T-cell (primary cell): ENCODE measurements at regions of chr20 and their contacts with region 1.

Region 1: DNA sequence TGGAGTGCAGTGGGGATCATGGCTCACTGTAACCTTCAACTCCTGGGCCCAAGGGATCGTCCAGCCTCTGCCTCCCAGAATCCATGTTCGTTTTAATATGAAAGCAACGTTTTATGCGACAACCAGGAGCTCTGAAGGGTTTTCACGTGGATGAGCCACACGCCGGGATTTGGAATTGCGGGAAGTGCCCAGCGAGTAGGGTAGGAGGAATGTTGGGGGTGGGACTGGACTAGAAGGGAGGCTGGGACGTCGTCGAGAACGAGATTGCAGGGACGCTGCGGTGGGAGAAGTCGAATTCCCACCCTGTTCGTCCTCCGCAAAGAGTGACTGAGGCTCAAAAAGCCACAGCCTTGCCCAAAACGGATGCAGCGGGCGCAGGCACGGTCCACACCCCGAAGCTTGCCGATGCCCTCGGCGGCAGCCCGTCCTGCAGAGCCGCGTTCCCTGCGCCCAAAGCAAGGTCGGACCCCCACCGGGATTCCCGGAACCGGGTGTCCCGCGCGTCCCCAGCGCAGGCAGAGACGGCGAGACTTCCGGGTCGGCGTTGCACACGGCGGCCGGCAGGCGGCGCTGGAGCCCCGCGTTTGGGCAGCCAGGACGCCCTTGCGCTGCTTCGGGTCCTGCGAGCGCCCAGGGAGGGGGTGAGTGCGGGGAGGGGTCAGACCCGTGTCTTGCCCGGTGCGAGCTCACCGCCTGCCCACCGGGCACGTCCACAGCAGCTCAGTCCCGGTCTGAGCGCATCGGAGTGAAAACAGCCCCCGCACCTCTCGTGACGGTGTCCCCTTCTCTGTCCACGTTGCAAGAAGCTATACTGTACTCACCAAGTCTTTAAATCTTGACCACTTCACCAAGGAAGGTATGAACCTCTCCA is 87.8 kb downstream of the DHX35 start:
- DNase-seq: peak; percentile 42 to 90 (median 66)
- ATAC-seq: peak; percentile 86 to 93 (median 91)
- H3K4me3 ChIP-seq: peak overlapping the region; percentile 48 to 74
- H3K4me3 Mint-ChIP-seq: peak overlapping the region; percentile 80 to 87 (median 82)
- H3K27ac ChIP-seq: peak overlapping the region; percentile 52
- H3K27ac Mint-ChIP-seq: peak overlapping the region; percentile 24 to 79
- H3K4me1 ChIP-seq: peaks cover 3 to 14% of the 10 kb centered on the region in 2 experiments
- H3K4me1 Mint-ChIP-seq: peaks cover 0 to 14% (median 7%) of the 10 kb centered on the region in 3 donors
- H3K27me3 ChIP-seq: peaks cover 0 to 4% of the 10 kb centered on the region in 2 experiments
- H3K27me3 Mint-ChIP-seq: peaks cover 0 to 6% of the 10 kb centered on the region in 2 donors

Region 2: DNA sequence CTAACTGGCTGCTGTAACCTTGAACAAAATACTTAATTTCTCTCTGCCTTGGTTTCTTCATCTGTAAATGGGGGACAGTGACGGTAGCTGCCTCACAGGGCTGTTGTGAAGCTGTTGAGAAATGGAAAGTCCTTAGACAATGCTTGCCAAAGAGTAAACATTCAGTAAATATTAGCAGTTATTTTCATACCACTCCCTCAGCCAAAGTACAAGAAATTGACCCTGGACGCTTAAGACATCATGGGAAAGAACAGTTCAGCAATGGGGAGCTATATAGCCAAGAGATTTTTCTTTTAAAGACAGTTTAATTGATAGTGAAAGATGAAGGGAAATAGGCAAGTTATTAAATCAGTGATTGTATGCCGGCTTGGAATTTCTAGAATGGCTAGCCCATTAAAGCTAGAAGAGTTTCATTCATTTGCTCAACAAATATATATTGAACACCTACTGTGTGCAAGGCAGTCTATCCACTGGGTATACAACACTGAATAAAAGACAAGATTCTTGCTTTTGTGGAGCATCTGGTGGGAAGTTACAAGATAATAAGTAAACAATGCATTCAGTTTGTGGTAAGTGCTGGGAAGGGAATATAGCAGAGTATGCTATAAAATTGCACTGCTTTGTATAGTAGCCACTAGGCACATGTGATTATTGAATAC is 1354.1 kb before region 1 on chr20:
- CTCF ChIA-PET with region 1: interaction called in 1 of 2 experiments, 10 read pairs
- POLR2A ChIA-PET with region 1: no interaction called
- DNase-seq: no peak
- ATAC-seq: no peak
- H3K4me3 ChIP-seq: no peak overlapping the region
- H3K4me3 Mint-ChIP-seq: peak overlapping the region; percentile 25 to 37 (median 28)
- H3K27ac ChIP-seq: no peak overlapping the region
- H3K27ac Mint-ChIP-seq: no peak overlapping the region
- H3K4me1 ChIP-seq: peaks cover 5 to 20% of the 10 kb centered on the region in 2 experiments
- H3K4me1 Mint-ChIP-seq: peaks cover 42 to 52% (median 48%) of the 10 kb centered on the region in 3 donors
- H3K27me3 ChIP-seq: peaks cover 0 to 14% of the 10 kb centered on the region in 2 experiments
- H3K27me3 Mint-ChIP-seq: peaks cover 3 to 13% of the 10 kb centered on the region in 2 donors

Region 3: DNA sequence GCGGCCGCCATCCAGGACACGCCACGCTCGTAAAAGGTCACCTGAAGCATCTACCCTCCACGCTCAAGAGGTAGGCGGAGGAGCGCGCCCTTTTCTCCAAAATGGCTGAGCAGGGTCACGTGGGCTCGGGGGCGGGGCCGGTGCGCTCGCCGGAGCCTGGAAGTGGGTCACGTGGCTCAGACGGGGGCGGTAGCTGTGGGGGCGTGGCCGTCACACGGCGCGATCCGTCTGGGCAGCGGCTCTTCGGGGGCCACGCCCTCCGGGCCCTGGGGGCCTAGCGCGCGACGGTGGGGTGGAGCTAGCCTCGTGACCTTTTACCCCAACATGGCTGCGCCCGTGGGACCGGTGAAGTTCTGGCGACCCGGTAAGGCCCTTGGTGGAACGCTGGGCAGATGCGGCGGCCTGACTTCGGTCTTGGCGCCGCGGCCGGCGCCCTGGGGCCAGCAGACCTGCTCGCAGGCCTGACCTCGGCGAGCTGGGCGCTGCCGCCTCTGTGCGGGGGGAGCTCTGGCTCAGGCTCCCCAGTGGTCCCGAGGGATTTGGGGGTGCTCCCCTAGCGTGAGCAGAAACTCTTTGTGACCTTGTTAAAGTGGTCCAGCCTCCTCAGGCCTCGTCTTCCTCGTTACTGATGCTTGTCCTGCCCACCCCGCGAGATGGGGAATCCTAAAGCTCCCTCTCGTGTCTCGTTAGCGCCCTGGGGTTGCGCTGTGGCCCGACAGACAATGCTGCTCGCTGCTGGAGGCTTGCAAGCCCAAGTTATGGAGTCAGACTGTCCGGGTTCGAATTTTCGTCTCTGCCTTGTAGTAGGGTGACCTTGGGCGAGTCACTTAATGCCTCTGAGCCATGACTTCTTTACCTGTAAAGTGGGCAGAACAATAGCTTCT is 87.6 kb before region 1 on chr20 and contains the start of gene DHX35:
- CTCF ChIA-PET with region 1: interaction called in 1 of 2 experiments, 13 read pairs
- POLR2A ChIA-PET with region 1: no interaction called
- DNase-seq: peak; percentile 97 to 100 (median 99)
- ATAC-seq: peak; percentile 97 to 100 (median 99)
- H3K4me3 ChIP-seq: peak within 1 kb of the TSS; percentile 74 to 99
- H3K4me3 Mint-ChIP-seq: peak within 1 kb of the TSS; percentile 89 to 98 (median 92)
- H3K27ac ChIP-seq: peak within 1 kb of the TSS; percentile 58
- H3K27ac Mint-ChIP-seq: peak within 1 kb of the TSS; percentile 95
- H3K4me1 ChIP-seq: peaks cover 12 to 15% of the 10 kb centered on the region in 2 experiments
- H3K4me1 Mint-ChIP-seq: peaks cover 26 to 36% (median 33%) of the 10 kb centered on the region in 3 donors
- H3K27me3 ChIP-seq: no peaks in the 10 kb centered on the region
- H3K27me3 Mint-ChIP-seq: no peaks in the 10 kb centered on the region
- total RNA-seq, gene DHX35: 8.6 to 11.5 (median 11.2) TPM

Region 4: DNA sequence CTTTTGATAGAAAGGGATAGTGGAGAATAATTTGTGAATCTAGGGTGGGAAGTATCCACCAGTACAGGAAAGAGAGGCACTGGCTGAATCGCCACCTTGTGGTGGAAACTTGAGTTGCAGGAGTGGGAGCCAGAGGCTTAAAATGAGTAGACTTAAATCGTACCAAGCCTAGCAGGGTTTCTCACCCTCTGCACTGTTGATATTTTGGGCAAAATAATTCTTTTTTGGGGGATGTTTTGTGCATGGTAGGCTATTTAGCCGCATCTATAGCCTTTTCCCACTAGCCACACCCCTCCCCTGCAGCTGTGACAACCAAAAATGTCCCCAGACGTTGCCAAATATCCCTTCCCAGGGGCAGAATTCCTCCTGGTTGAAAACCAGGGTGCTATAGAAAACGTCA is 31.3 kb after region 1 on chr20:
- CTCF ChIA-PET with region 1: interaction called, 33 to 37 read pairs
- POLR2A ChIA-PET with region 1: no interaction called
- DNase-seq: peak; percentile 29 to 86 (median 71)
- ATAC-seq: peak; percentile 68 to 82 (median 74)
- H3K4me3 ChIP-seq: no peak overlapping the region
- H3K4me3 Mint-ChIP-seq: no peak overlapping the region
- H3K27ac ChIP-seq: no peak overlapping the region
- H3K27ac Mint-ChIP-seq: no peak overlapping the region
- H3K4me1 ChIP-seq: peaks cover 0 to 2% of the 10 kb centered on the region in 2 experiments
- H3K4me1 Mint-ChIP-seq: peaks cover 0 to 2% (median 2%) of the 10 kb centered on the region in 3 donors
- H3K27me3 ChIP-seq: peaks cover 0 to 23% of the 10 kb centered on the region in 2 experiments
- H3K27me3 Mint-ChIP-seq: peaks cover 44 to 48% of the 10 kb centered on the region in 2 donors

Region 5: DNA sequence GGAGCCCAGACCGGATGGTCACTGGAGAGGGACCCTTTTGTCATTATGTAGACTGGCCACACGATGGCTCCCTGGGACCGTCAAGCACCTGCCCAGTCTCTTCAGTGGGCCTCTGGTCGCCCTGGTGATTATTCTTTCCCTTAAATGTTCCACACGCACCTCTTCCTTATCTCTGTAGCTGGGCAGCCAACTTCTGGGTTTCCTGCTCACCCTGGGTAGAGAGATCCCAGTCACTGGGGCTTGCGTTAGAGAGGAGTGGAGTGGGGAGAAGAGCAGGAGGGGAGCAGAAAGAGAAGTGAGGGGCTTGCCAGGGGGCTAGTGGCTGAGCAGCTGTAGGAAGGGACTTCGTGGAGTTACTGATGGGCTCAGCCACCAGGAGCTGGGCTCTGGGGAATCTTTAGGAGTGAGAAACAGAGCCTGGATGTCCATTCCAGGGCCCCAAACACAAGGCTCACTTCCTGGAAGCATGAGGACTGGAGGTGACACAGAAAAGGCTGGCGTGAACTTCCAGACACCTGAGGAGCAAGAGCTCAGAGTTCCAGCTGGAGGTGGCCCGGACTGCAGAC is 62.3 kb after region 1 on chr20:
- CTCF ChIA-PET with region 1: no interaction called
- POLR2A ChIA-PET with region 1: no interaction called
- DNase-seq: peak in 1 of 35 experiments; percentile 11
- ATAC-seq: no peak
- H3K4me3 ChIP-seq: no peak overlapping the region
- H3K4me3 Mint-ChIP-seq: no peak overlapping the region
- H3K27ac ChIP-seq: no peak overlapping the region
- H3K27ac Mint-ChIP-seq: no peak overlapping the region
- H3K4me1 ChIP-seq: no peaks in the 10 kb centered on the region
- H3K4me1 Mint-ChIP-seq: no peaks in the 10 kb centered on the region
- H3K27me3 ChIP-seq: peaks cover 2 to 41% of the 10 kb centered on the region in 2 experiments
- H3K27me3 Mint-ChIP-seq: peaks cover 50 to 69% of the 10 kb centered on the region in 2 donors